Naive thymus-derived CD8-positive, alpha-beta T cell (primary cell): ENCODE measurements at regions of chr18 and their contacts with region 1.

Region 1: GRCh38 chr18:48940854-48941611 is 9.7 kb downstream of the SMAD7 start:
- DNase-seq: peak; percentile 74 to 98 (median 94)
- ATAC-seq: peak; percentile 84 to 89
- H3K4me3 Mint-ChIP-seq: peak overlapping the region; percentile 73 to 88 (median 85)
- H3K27ac Mint-ChIP-seq: peak overlapping the region; percentile 89 to 99 (median 98)
- H3K4me1 Mint-ChIP-seq: peaks cover 36 to 93% (median 92%) of the 10 kb centered on the region in 4 donors
- H3K27me3 Mint-ChIP-seq: peaks cover 0 to 20% (median 0%) of the 10 kb centered on the region in 5 donors

Region 2: DNA sequence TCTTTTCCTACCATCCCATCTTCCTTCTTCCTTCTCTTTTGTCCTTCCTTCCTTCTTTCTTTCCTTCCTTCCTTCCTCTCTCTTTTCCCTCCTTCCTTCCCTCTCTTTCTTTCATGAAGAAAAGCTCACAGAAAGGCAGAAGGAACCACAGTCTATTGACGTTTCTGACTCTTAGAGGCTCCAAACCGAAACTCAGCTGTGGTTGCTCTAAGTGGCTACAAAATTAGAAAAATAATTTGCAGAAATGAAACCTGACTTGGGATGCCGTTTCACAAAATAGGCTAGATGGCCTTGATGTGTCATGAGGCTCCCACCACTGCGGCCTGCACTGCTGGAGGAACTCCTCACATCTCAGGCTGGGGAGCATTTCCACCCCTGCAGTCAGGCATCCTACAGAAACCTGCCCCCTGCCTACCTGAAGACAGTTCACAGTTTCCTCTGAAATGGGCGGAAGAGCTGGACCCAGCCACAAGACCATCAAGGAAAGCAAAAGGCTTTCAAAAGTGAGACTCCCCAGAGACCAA is 155.9 kb before region 1 on chr18:
- POLR2A ChIA-PET with region 1: no interaction called
- DNase-seq: peak in 3 of 10 donors; percentile 7 to 52 (median 31)
- ATAC-seq: peak; percentile 14 to 46
- H3K4me3 Mint-ChIP-seq: peak overlapping the region in 2 of 10 donors; percentile 46 to 78
- H3K27ac Mint-ChIP-seq: peak overlapping the region in 5 of 10 donors; percentile 11 to 82 (median 68)
- H3K4me1 Mint-ChIP-seq: peaks cover 0 to 48% (median 4%) of the 10 kb centered on the region in 4 donors
- H3K27me3 Mint-ChIP-seq: no peaks in the 10 kb centered on the region

Region 3: GRCh38 chr18:48902023-48902855 is 38.8 kb before region 1 on chr18:
- POLR2A ChIA-PET with region 1: no interaction called
- DNase-seq: no peak
- ATAC-seq: no peak
- H3K4me3 Mint-ChIP-seq: no peak overlapping the region
- H3K27ac Mint-ChIP-seq: no peak overlapping the region
- H3K4me1 Mint-ChIP-seq: peaks cover 5 to 16% (median 9%) of the 10 kb centered on the region in 4 donors
- H3K27me3 Mint-ChIP-seq: peaks cover 0 to 6% (median 0%) of the 10 kb centered on the region in 5 donors

Region 4: GRCh38 chr18:48928787-48929186 is 12.2 kb before region 1 on chr18:
- POLR2A ChIA-PET with region 1: interaction called, 35 read pairs
- DNase-seq: peak; percentile 40 to 88 (median 71)
- ATAC-seq: peak; percentile 93 to 98
- H3K4me3 Mint-ChIP-seq: peak overlapping the region; percentile 62 to 86 (median 78)
- H3K27ac Mint-ChIP-seq: peak overlapping the region; percentile 79 to 95 (median 89)
- H3K4me1 Mint-ChIP-seq: peaks cover 43 to 98% (median 89%) of the 10 kb centered on the region in 4 donors
- H3K27me3 Mint-ChIP-seq: no peaks in the 10 kb centered on the region

Region 5: DNA sequence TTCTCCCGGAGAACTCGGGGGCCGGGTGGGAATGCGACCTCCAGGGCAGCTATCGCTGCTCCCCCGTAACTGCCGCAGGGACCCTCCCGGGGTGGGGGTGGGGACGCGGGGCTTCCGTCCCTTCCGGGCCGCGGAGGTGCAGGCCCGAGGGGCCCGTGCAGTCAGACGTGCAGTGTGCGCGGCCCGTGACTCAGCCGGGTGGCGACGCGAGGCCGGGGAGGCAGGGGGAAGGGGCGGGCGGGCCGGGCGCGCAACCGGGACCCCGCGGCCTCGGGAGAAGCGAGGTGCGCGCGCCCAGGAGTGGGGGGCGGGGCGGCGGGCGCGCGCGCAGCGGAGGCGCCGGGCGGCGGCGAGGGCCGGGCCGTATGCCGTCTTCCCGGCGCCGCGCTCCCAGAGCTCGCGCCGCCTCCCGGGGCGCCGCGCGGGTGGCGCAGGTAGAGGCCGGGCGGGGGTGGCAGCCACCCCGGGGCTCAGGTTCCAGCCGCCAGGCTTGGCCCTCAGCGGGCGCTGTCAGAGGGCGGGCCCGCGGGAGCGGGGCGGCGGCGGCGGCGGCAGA is 34.7 kb after region 1 on chr18:
- POLR2A ChIA-PET with region 1: no interaction called
- DNase-seq: peak in 8 of 10 donors; percentile 25 to 47 (median 36)
- ATAC-seq: peak; percentile 83 to 90
- H3K4me3 Mint-ChIP-seq: peak overlapping the region in 6 of 10 donors; percentile 8 to 53 (median 45)
- H3K27ac Mint-ChIP-seq: no peak overlapping the region
- H3K4me1 Mint-ChIP-seq: peaks cover 4 to 17% (median 8%) of the 10 kb centered on the region in 4 donors
- H3K27me3 Mint-ChIP-seq: peaks cover 16 to 42% (median 29%) of the 10 kb centered on the region in 5 donors